GM12878 (cell line): ENCODE measurements at regions of chr11 and their contacts with region 1.

Region 1: GRCh38 chr11:76235233-76236091 is 29.2 kb upstream of the WNT11 start:
- DNase-seq: peak; percentile 93
- ATAC-seq: peak; percentile 85
- H3K4me3 ChIP-seq: peak overlapping the region; percentile 80
- H3K27ac ChIP-seq: peak overlapping the region; percentile 73
- H3K4me1 ChIP-seq: peaks cover 34% of the 10 kb centered on the region
- H3K27me3 ChIP-seq: peaks cover 0 to 1% of the 10 kb centered on the region in 2 experiments; a peak in 1 of 4 replicates
- CTCF ChIP-seq: no peak
- EP300 ChIP-seq: peak in 1 of 2 experiments; percentile 73; a peak in 1 of 4 replicates
- POLR2A ChIP-seq: peak; percentile 77
- RAD21 ChIP-seq: no peak

Region 2: GRCh38 chr11:76293189-76293631 is 57.7 kb after region 1 on chr11:
- CTCF ChIA-PET with region 1: no interaction called
- POLR2A ChIA-PET with region 1: interaction called, 4 read pairs
- RAD21 ChIA-PET with region 1: interaction called, 3 read pairs
- SMC1A ChIA-PET with region 1: interaction called, 3 read pairs
- in situ Hi-C with region 1: no loop called
- intact Hi-C with region 1: loop called (anchors 5 kb)
- DNase-seq: peak; percentile 71
- ATAC-seq: peak; percentile 78
- H3K4me3 ChIP-seq: peak overlapping the region; percentile 38; the same call in 1 of the 2 replicates
- H3K27ac ChIP-seq: no peak overlapping the region
- H3K4me1 ChIP-seq: peaks cover 31% of the 10 kb centered on the region
- H3K27me3 ChIP-seq: no peaks in the 10 kb centered on the region; a peak in 2 of 4 replicates
- CTCF ChIP-seq: no peak
- EP300 ChIP-seq: no peak; a peak in 1 of 4 replicates
- POLR2A ChIP-seq: no peak
- RAD21 ChIP-seq: no peak

Region 3: DNA sequence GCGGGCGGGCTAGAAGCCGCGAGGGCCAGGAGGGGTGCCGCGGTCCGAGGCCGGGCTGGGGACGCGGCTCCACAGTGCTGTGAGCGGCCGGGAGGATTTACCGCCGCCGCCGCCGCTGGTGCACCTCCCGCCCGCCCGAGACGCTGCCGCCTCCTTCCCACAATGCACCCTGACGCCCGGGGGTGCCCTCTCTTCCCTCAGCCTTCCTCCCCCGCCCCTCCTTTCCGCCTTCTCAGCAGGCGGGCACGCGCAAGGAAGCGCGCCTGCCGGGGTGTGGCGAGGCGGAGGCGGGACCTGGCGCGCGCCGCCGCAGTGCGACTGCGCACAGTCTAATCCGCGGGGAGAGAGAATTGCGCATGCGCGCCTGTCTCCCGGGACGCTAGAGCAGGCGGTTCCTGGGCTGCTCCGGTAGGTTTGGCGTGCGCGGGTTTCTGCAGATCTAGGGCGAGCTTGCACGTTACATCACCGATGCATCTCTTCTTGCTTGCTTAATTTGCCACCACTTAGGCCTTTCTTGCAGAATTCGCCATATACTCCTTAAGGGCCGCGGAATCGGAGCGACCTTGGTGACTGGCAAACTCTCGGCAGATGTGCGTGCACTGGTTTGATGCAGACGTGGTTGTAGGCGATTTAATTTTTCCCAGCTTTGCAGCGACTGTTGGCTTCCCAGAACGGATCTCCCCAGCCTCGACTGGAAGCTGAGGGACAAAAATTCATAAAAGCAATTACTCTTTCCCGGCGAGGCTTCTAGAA is 145.7 kb after region 1 on chr11 and contains the starts of genes GVQW3 and THAP12:
- CTCF ChIA-PET with region 1: no interaction called
- POLR2A ChIA-PET with region 1: interaction called, 3 read pairs
- RAD21 ChIA-PET with region 1: no interaction called
- SMC1A ChIA-PET with region 1: no interaction called
- in situ Hi-C with region 1: no loop called
- intact Hi-C with region 1: loop called (anchors 5 kb)
- DNase-seq: peak; percentile 91
- ATAC-seq: peak; percentile 91
- H3K4me3 ChIP-seq: peak within 1 kb of the TSS; percentile 71
- H3K27ac ChIP-seq: 0 out of 2 replicates have a peak within 1 kb of the TSS, but pooled peaks have one; percentile 7
- H3K4me1 ChIP-seq: peaks cover 22% of the 10 kb centered on the region
- H3K27me3 ChIP-seq: no peaks in the 10 kb centered on the region
- CTCF ChIP-seq: peak; percentile 17 to 50 (median 20); a peak in 3 of 6 replicates
- EP300 ChIP-seq: no peak
- POLR2A ChIP-seq: peak; percentile 72
- RAD21 ChIP-seq: no peak
- polyA plus RNA-seq, gene GVQW3: 0.13 to 0.75 TPM
- polyA plus RNA-seq, gene THAP12: 12.6 to 15.0 TPM

Region 4: DNA sequence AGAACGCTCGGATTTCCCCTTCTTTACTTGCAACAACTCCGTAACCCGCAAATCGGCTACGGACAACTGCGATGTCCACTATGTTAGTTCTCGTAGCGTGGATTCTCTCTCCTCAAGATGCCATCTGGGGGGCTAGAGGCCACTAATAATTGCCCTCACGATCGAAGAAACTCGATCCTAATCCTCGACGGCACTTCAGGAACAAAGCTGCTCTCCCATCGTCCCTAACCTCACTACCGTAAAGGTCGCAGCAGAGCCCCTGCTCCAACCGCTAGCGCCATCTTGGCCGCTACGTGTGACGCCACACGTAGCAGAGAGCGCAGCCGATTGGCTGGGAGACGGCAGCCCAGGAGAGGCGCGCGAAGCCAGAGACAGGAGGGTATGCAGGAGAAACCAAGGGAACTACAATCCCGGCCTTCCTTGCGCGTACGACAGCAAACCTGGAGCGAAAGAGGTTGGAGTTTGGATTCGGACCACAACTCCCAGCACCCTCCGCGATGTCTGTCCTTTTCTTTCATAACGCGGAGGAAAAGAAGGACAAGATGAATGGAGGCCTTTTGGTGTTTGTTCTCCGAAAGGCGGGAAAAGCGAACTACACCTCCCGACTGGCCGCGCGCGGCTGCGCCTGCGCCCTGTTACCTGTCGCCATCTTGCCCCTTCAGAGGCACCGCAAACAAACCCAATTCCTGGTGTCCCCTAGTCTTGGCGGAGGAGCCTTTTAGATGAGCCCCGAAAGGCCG is 209.1 kb after region 1 on chr11 and contains the start of gene EMSY:
- CTCF ChIA-PET with region 1: no interaction called
- POLR2A ChIA-PET with region 1: no interaction called
- RAD21 ChIA-PET with region 1: no interaction called
- SMC1A ChIA-PET with region 1: no interaction called
- in situ Hi-C with region 1: no loop called
- intact Hi-C with region 1: loop called (anchors 10 kb)
- DNase-seq: peak; percentile 99
- ATAC-seq: peak; percentile 95
- H3K4me3 ChIP-seq: peak within 1 kb of the TSS; percentile 98
- H3K27ac ChIP-seq: peak within 1 kb of the TSS; percentile 95
- H3K4me1 ChIP-seq: no peaks in the 10 kb centered on the region; the same call in 1 of the 2 replicates
- H3K27me3 ChIP-seq: no peaks in the 10 kb centered on the region
- CTCF ChIP-seq: no peak
- EP300 ChIP-seq: no peak
- POLR2A ChIP-seq: peak; percentile 100
- RAD21 ChIP-seq: no peak
- polyA plus RNA-seq, gene EMSY: 9.3 to 9.8 TPM